ENCODE measurements at regions of chr6 and their contacts with region 1.

Region 1: GRCh38 chr6:109705258-109705657 is 14.2 kb downstream of the FIG4 start:
- DNase-seq: peak; percentile 72 to 79 (median 75)
- ATAC-seq: peak; percentile 95 to 98 (median 96)
- H3K4me3 ChIP-seq: no peak overlapping the region
- H3K27ac ChIP-seq: no peak overlapping the region
- H3K4me1 ChIP-seq: peaks cover 0 to 56% (median 4%) of the 10 kb centered on the region in 12 donors
- H3K27me3 ChIP-seq: no peaks in the 10 kb centered on the region
- CTCF ChIP-seq: peak; percentile 89 to 99 (median 98)
- POLR2A ChIP-seq: no peak

Region 2: DNA sequence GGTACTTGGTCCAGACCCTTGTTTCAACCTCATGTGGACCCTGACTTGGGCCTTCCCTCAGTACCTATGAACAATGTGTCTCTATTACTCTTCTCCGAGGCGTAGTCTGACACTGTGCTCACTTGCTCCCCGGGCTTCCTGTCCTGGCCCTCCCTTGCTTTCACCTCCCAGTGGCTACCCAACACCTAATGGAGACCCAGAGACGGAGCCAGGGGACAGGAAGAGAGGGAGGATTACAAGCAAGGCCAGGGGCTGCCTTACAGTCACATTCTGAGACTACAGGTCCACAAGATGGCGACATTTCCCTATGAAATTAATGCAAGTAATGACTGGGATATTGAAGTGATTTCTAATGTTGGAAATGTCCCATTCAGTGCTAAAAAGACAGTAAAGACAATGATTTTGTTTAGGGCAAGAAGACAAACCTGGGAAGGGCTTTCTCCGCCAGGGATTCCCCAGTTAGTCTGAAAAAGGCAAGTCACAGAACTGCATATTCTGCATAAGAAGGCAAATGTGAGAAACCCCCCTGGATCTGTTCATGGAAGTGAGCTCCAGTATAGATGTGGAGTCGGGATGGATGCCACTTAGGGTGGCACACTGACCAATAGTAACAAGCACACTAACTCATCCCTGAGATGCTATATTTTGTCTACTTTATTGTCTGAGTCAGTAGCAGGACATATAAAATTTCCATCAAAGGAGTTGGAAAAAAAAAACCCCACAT is 178.2 kb before region 1 on chr6:
- intact Hi-C with region 1: loop called in 3 of 10 experiments (anchors 5 to 10 kb)
- DNase-seq: peak in 2 of 5 donors; percentile 30 to 39
- ATAC-seq: peak in 3 of 4 donors; percentile 56 to 64 (median 60)
- H3K4me3 ChIP-seq: no peak overlapping the region
- H3K27ac ChIP-seq: no peak overlapping the region
- H3K4me1 ChIP-seq: no peaks in the 10 kb centered on the region
- H3K27me3 ChIP-seq: no peaks in the 10 kb centered on the region
- CTCF ChIP-seq: peak; percentile 32 to 68 (median 51)
- POLR2A ChIP-seq: no peak

Region 3: GRCh38 chr6:109743739-109744138 is 38.5 kb after region 1 on chr6:
- intact Hi-C with region 1: no loop called
- DNase-seq: no peak
- ATAC-seq: no peak
- H3K4me3 ChIP-seq: no peak overlapping the region
- H3K27ac ChIP-seq: no peak overlapping the region
- H3K4me1 ChIP-seq: peaks cover 0 to 7% (median 0%) of the 10 kb centered on the region in 12 donors
- H3K27me3 ChIP-seq: no peaks in the 10 kb centered on the region
- CTCF ChIP-seq: no peak
- POLR2A ChIP-seq: no peak

Region 4: DNA sequence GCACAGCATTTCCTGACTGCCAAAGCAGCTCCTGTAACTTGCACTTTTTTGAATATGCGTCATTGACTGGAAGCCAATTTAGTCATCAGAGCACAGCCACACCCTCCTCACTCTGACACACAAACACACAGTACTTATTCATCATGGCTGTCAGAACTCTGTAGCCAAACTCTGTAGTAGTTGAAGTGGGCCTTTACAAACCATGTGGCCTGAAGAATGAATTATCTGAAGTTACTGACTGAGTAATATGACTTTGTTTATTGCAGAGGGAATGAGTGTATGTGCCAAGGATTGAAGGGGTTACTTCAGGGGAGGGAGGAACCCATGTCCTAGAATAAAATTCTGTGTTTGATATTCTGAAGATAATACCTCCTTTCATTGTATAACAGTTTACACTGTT is 88.5 kb after region 1 on chr6:
- intact Hi-C with region 1: loop called in 3 of 10 experiments (anchors 5 to 10 kb)
- DNase-seq: peak in 3 of 5 donors; percentile 19 to 39 (median 38)
- ATAC-seq: peak; percentile 65 to 99 (median 97)
- H3K4me3 ChIP-seq: no peak overlapping the region
- H3K27ac ChIP-seq: peak overlapping the region in 11 of 12 donors; percentile 14 to 66 (median 56)
- H3K4me1 ChIP-seq: peaks cover 3 to 18% (median 12%) of the 10 kb centered on the region in 12 donors
- H3K27me3 ChIP-seq: no peaks in the 10 kb centered on the region
- CTCF ChIP-seq: no peak
- POLR2A ChIP-seq: no peak

Region 5: GRCh38 chr6:110039364-110039980 is 334.2 kb after region 1 on chr6:
- intact Hi-C with region 1: loop called (anchors 1 to 2 kb)
- DNase-seq: peak; percentile 75 to 90 (median 82)
- ATAC-seq: peak; percentile 79 to 94 (median 91)
- H3K4me3 ChIP-seq: peak overlapping the region in 10 of 12 donors; percentile 11 to 47 (median 31)
- H3K27ac ChIP-seq: peak overlapping the region in 1 of 12 donors; percentile 59
- H3K4me1 ChIP-seq: peaks cover 0 to 11% (median 0%) of the 10 kb centered on the region in 12 donors
- H3K27me3 ChIP-seq: no peaks in the 10 kb centered on the region
- CTCF ChIP-seq: peak; percentile 81 to 95 (median 88)
- POLR2A ChIP-seq: no peak

Region 6: GRCh38 chr6:110389689-110390382 is 684.6 kb after region 1 on chr6:
- intact Hi-C with region 1: loop called in 9 of 10 experiments (anchors 2 to 10 kb)
- DNase-seq: no peak
- ATAC-seq: peak in 3 of 4 donors; percentile 7 to 57 (median 29)
- H3K4me3 ChIP-seq: no peak overlapping the region
- H3K27ac ChIP-seq: peak overlapping the region in 1 of 12 donors; percentile 12
- H3K4me1 ChIP-seq: peaks cover 0 to 13% (median 5%) of the 10 kb centered on the region in 12 donors
- H3K27me3 ChIP-seq: no peaks in the 10 kb centered on the region
- CTCF ChIP-seq: no peak
- POLR2A ChIP-seq: no peak